Breast epithelium (tissue), 4 donors: ENCODE measurements at regions of chr15 and their contacts with region 1.

Region 1: GRCh38 chr15:91224755-91225380 is 124.8 kb downstream of the SV2B start:
- DNase-seq: no peak
- H3K4me3 ChIP-seq: no peak overlapping the region
- H3K27ac ChIP-seq: no peak overlapping the region
- H3K4me1 ChIP-seq: no peaks in the 10 kb centered on the region
- H3K27me3 ChIP-seq: peaks cover 0 to 11% of the 10 kb centered on the region in 2 donors
- CTCF ChIP-seq: peak in 2 of 3 donors; percentile 56 to 58
- POLR2A ChIP-seq: no peak

Region 2: DNA sequence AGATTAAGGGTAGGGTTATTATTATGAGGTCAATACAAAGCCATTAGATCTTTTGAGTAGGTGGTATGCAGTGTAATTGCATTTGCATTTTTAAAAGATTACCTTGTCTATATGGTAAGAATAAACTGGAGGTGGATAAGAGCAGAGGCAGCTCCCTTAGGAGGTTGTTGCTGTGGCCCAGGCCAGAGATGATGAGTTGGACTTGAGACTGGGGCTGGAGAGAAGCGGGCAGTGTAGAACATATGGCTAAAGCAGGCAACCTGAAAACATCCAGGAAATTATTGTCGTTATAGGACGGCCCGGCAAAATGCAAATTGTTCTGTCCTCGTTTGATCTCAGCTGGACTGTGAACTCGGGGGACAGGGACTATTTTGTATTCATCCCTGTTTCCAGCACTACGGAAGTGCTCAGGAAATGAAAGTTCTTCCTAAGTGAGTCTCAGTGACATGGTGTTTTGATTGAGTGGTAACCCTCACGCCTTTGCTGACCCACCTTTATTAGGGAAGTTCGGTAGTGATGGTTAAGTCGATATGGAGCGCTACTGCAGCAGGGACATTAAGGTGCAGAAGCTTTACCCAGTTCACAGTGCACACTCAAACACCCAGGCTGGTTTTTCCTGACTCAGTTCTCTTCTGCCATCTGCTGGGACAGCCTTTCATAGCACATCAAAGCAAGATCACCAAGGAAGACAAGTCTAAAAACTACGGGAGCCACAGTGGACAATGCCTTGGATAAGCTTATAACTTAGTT is 175.3 kb before region 1 on chr15:
- intact Hi-C with region 1: loop called (anchors 10 kb)
- DNase-seq: peak in 1 of 2 donors; percentile 42
- H3K4me3 ChIP-seq: no peak overlapping the region
- H3K27ac ChIP-seq: no peak overlapping the region
- H3K4me1 ChIP-seq: no peaks in the 10 kb centered on the region
- H3K27me3 ChIP-seq: peaks cover 0 to 13% of the 10 kb centered on the region in 2 donors
- CTCF ChIP-seq: peak in 2 of 3 donors; percentile 56 to 59
- POLR2A ChIP-seq: no peak